Pancreas (tissue), 10 donors: ENCODE measurements at regions of chr17 and their contacts with region 1.

Region 1: DNA sequence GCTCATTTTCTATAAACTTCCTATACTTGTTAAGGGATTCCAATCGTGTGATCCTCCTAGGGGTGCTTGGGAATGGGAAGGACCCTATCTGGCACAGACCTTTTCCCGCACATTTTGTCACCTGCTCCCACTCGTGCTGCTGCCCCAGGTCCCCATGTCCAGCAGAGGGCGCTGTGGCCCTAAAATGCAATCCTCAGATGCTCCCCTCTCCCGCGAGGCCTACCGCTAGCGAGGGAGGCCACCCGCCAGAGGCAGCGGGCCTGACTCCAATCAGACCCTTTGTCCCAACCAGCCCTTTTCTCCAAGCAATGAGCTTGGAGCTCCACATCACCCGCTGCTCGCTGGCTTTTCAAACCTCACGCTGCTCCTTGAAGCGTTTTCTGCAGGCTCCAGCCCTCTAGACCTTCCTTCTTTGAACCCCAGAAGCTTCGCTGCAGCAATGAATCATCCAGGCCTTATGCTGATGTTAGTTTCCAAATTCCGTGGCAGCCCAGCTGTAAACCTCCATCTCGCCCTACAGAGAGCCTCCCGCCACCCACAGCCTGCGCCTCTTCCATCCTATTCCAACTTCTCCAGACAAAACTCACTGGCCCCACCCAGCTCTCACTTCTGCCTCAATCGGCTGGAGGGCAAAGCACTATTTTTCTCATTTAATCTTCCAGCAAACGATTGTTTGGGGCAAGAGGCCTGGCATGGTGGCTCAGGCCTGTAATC is 23.6 kb upstream of the FZD2 start:
- DNase-seq: peak; percentile 64 to 97 (median 83)
- ATAC-seq: peak; percentile 82 to 96 (median 94)
- H3K4me3 ChIP-seq: no peak overlapping the region
- H3K27ac ChIP-seq: no peak overlapping the region
- H3K4me1 ChIP-seq: no peaks in the 10 kb centered on the region
- H3K27me3 ChIP-seq: no peaks in the 10 kb centered on the region
- CTCF ChIP-seq: peak; percentile 83 to 93 (median 88)

Region 2: DNA sequence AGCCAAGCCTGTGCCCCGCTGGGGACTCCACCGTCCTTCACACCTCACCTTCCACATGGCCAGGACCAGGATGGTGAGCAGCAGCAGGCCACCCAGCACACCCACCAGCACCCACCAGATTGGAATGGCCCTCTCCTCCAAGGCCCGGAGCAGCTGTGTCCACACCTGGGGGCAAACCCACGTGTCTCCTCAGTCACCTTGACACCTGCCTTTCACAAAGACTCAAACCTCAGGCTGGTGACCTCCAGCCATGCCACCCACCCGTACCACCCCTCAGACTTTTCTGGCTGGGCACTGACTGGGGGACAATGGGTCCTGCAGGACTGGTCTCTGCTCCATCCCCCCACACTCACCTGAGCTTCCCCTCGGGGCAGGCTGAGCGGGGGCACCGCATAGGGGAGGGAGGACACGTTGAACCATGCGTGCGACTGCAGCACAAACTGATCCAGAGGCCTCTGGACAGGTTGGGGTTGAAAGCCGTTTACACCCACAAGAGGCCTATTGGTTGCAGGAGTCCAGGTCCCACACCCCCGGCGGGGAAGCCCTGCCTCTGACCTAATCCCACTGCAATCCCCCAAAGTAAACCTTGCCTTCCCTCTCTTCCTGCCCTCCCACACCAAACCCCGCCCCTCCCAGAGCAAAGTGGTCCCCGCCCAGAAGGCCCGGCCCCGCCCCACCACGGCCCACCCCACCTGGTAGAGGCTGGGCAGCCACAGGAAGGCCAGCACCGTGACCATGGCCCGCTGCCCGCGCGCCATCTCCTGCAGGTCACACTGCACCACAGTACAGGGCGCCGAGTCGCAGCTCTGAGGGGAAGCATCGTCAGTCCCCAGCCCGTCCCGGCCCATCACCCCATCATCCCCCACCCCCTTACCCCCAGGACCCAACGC is 159.1 kb before region 1 on chr17:
- intact Hi-C with region 1: no loop called
- DNase-seq: peak in 2 of 6 donors; percentile 37 to 56
- ATAC-seq: peak in 2 of 4 donors; percentile 24 to 56
- H3K4me3 ChIP-seq: no peak overlapping the region
- H3K27ac ChIP-seq: no peak overlapping the region
- H3K4me1 ChIP-seq: no peaks in the 10 kb centered on the region
- H3K27me3 ChIP-seq: no peaks in the 10 kb centered on the region
- CTCF ChIP-seq: no peak

Region 3: DNA sequence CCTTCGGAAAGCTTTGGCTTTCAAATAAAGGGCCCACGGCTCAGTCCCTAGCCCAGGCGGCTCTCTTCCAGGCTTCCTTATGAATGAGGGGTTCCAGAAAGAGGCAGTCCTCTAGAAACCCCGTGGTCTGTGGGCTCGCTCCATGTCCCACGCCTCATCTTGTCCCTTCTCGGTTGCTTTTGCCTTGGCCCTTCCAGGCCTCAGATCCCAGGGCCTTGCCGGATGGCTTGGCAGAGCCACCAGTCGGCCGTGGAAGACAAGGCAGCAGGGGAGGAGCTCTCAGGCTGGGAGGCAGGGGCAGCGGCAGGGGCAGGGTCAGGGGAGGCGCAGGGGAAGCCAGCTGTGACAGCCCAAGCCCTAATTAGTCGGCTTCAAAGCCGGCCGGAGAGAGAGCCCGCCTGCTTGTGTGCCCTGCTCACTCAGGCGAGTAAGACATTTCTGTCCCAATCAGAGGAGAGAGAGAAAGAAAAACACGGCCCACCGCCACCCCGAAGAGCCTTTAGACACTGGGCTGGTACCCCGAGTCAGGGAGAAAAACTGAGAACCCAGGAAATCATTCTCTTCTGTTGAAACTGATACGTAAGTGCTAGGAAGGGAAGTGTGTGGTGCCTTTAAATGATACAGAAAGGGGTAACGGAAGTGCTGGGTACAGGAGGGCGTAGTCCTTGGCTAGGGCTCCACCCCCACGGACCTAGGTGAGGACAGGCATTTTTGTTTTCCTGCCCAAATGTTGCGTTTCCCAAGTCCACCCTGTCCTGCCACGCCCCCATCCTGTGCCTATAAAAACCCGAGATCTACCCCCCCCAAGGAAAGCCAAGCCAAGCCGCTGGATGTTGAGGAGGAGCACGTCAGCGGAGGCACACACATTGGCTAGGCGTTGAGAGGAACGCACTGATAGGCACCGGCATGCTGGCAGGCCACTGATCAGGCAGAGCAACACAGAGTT is 94.8 kb after region 1 on chr17:
- intact Hi-C with region 1: loop called in 1 of 3 experiments (anchors 5 kb)
- DNase-seq: peak in 5 of 6 donors; percentile 19 to 73 (median 68)
- ATAC-seq: peak; percentile 81 to 92 (median 86)
- H3K4me3 ChIP-seq: peak overlapping the region in 2 of 4 donors; percentile 11 to 36
- H3K27ac ChIP-seq: peak overlapping the region in 1 of 4 donors; percentile 44
- H3K4me1 ChIP-seq: peaks cover 0 to 2% (median 0%) of the 10 kb centered on the region in 3 donors
- H3K27me3 ChIP-seq: no peaks in the 10 kb centered on the region
- CTCF ChIP-seq: no peak

Region 4: DNA sequence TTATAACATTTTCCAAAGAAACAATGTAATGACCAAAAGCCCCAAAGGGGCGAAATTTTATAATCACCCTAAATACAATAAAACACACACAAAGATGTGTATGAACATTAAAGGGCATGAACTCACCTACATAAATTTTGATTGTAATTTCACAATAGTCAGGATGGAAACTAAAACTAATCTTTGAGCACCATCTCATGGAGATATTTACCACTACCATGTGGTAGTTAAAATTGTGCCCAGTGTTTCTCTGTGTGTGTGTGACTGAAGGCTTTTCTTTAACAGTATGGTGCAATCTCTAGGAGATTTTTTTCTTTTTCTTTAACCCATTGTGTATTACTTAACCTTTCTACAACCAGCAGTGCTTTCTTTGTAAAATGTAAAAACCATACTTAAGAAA is 102.9 kb after region 1 on chr17:
- intact Hi-C with region 1: loop called in 1 of 3 experiments (anchors 5 kb)
- DNase-seq: no peak
- ATAC-seq: peak in 3 of 4 donors; percentile 69 to 81 (median 71)
- H3K4me3 ChIP-seq: no peak overlapping the region
- H3K27ac ChIP-seq: no peak overlapping the region
- H3K4me1 ChIP-seq: no peaks in the 10 kb centered on the region
- H3K27me3 ChIP-seq: peaks cover 0 to 3% (median 0%) of the 10 kb centered on the region in 4 donors
- CTCF ChIP-seq: peak in 1 of 4 donors; percentile 10